ENCODE measurements at regions of chr2 and their contacts with region 1.

Region 1: DNA sequence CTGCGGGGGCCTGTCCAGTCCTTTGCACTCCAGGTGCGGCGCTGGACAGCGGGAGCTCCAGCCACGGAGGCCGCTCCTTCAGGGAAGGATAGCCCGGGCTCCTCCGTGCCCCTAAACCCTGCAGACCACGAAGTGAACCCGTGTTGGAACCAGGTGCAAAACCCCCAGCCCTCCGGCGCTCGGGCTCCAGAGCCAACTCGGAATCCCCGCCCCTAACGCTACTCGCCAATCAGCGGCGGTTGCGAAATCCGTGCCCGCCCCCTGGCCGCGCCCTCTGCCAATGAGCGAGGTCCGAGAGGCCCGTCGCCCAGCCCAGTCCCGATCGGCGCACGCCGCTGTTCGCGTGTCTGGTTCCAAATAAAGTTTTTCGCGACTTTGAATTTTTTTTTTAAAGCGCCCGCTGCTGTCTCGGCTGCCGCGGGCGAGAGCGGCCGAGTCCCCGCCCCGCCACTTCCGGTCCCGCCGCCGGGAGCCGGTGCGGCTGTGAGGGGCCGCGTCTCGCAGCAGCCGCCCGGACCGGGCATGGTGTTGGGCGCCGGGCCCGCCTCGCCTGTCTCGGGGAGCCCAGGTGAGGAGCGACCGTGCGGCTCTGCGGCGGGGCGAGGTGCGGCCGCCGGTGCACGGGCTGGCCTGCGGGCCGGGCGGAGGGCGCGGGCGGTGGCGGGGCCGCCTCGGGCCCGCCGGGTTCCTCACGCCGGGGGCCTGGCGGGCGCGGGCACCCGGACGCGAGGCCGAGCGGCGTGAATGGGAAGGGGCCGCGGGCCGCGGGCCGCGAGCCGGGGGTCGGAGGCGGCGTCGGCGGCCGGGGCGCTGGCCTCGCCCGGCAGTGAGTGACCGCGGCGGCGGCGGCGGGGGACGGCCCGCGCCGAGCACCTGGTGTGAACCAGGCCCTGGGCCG is at the start of gene UBE2F:
- DNase-seq: peak; percentile 99
- ATAC-seq: peak; percentile 98
- total RNA-seq, gene UBE2F: 73.3 TPM

Region 2: GRCh38 chr2:237923481-237924163 is 43.2 kb before region 1 on chr2:
- intact Hi-C with region 1: loop called (anchors 5 kb)
- DNase-seq: peak; percentile 90
- ATAC-seq: peak; percentile 95

Region 3: GRCh38 chr2:238139196-238140039 is 172.6 kb after region 1 on chr2:
- intact Hi-C with region 1: loop called (anchors 10 kb)
- DNase-seq: peak; percentile 53
- ATAC-seq: peak; percentile 63

Measured in Right ventricle myocardium inferior (tissue), 1 donor.